ENCODE measurements at regions of chr9 and their contacts with region 1.

Region 1: GRCh38 chr9:108761655-108762347 is 94.0 kb downstream of the ACTL7B start:
- DNase-seq: peak in 4 of 9 experiments; percentile 21 to 35 (median 22)
- ATAC-seq: no peak
- H3K4me3 ChIP-seq: no peak overlapping the region
- H3K4me3 Mint-ChIP-seq: no peak overlapping the region
- H3K27ac ChIP-seq: no peak overlapping the region
- H3K27ac Mint-ChIP-seq: no peak overlapping the region
- H3K4me1 ChIP-seq: no peaks in the 10 kb centered on the region
- H3K4me1 Mint-ChIP-seq: peaks cover 3% of the 10 kb centered on the region
- H3K27me3 ChIP-seq: no peaks in the 10 kb centered on the region
- H3K27me3 Mint-ChIP-seq: peaks cover 3% of the 10 kb centered on the region
- CTCF ChIP-seq: peak; percentile 55

Region 2: GRCh38 chr9:107137495-107138202 is 1624.2 kb before region 1 on chr9:
- CTCF ChIA-PET with region 1: no interaction called
- POLR2A ChIA-PET with region 1: no interaction called
- intact Hi-C with region 1: loop called in 1 of 2 experiments (anchors 5 kb)
- DNase-seq: peak in 2 of 9 experiments; percentile 17 to 28
- ATAC-seq: no peak
- H3K4me3 ChIP-seq: no peak overlapping the region
- H3K4me3 Mint-ChIP-seq: no peak overlapping the region
- H3K27ac ChIP-seq: no peak overlapping the region
- H3K27ac Mint-ChIP-seq: no peak overlapping the region
- H3K4me1 ChIP-seq: no peaks in the 10 kb centered on the region
- H3K4me1 Mint-ChIP-seq: no peaks in the 10 kb centered on the region
- H3K27me3 ChIP-seq: no peaks in the 10 kb centered on the region
- H3K27me3 Mint-ChIP-seq: peaks cover 10% of the 10 kb centered on the region
- CTCF ChIP-seq: peak; percentile 60

Region 3: DNA sequence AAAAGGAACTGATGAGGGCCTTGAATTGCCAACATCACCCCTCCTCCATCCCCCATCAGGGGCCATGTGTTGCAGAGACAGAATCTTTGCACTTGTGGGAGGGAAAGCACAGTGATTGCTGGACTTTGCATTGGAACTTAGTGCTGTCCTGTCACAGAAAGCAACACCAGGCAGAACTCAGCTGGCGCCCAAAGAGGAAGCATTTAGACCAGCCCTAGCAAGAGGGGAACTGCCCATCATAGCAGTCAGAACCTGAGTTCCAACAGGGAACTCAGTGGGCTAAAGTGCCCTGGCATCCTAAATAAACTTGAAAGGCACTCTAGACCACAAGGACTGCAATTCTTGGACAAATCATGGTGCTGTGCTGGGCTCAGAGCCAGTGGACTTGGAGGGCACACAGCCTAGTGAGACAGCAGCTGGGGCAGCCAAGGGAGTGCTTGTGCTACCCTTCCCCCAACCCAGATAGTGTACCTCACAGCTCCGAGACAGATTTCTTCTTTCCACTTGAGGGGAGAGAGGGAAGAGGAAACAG is 34.2 kb before region 1 on chr9:
- CTCF ChIA-PET with region 1: no interaction called
- POLR2A ChIA-PET with region 1: no interaction called
- intact Hi-C with region 1: no loop called
- DNase-seq: no peak
- ATAC-seq: no peak
- H3K4me3 ChIP-seq: no peak overlapping the region
- H3K4me3 Mint-ChIP-seq: no peak overlapping the region
- H3K27ac ChIP-seq: no peak overlapping the region
- H3K27ac Mint-ChIP-seq: no peak overlapping the region
- H3K4me1 ChIP-seq: no peaks in the 10 kb centered on the region
- H3K4me1 Mint-ChIP-seq: no peaks in the 10 kb centered on the region
- H3K27me3 ChIP-seq: no peaks in the 10 kb centered on the region
- H3K27me3 Mint-ChIP-seq: no peaks in the 10 kb centered on the region
- CTCF ChIP-seq: no peak